CD4-positive, alpha-beta T cell (primary cell): ENCODE measurements at regions of chr10 and their contacts with region 1.

Region 1: GRCh38 chr10:70880077-70880534 is 8.3 kb downstream of the PCBD1 start:
- DNase-seq: peak; percentile 53 to 87 (median 66)
- ATAC-seq: peak; percentile 96
- H3K4me3 ChIP-seq: no peak overlapping the region
- H3K4me3 Mint-ChIP-seq: no peak overlapping the region
- H3K27ac ChIP-seq: no peak overlapping the region
- H3K27ac Mint-ChIP-seq: no peak overlapping the region
- H3K4me1 ChIP-seq: no peaks in the 10 kb centered on the region
- H3K4me1 Mint-ChIP-seq: peaks cover 4% of the 10 kb centered on the region
- H3K27me3 ChIP-seq: no peaks in the 10 kb centered on the region
- H3K27me3 Mint-ChIP-seq: no peaks in the 10 kb centered on the region
- CTCF ChIP-seq: peak; percentile 95

Region 2: GRCh38 chr10:70221030-70221429 is 659.1 kb before region 1 on chr10:
- CTCF ChIA-PET with region 1: no interaction called
- POLR2A ChIA-PET with region 1: no interaction called
- intact Hi-C with region 1: loop called in 1 of 2 experiments (anchors 5 kb)
- DNase-seq: peak in 1 of 14 experiments; percentile 8
- ATAC-seq: no peak
- H3K4me3 ChIP-seq: no peak overlapping the region
- H3K4me3 Mint-ChIP-seq: no peak overlapping the region
- H3K27ac ChIP-seq: no peak overlapping the region
- H3K27ac Mint-ChIP-seq: peak overlapping the region; percentile 21
- H3K4me1 ChIP-seq: peaks cover 3% of the 10 kb centered on the region
- H3K4me1 Mint-ChIP-seq: peaks cover 17% of the 10 kb centered on the region
- H3K27me3 ChIP-seq: no peaks in the 10 kb centered on the region
- H3K27me3 Mint-ChIP-seq: no peaks in the 10 kb centered on the region
- CTCF ChIP-seq: no peak

Region 3: DNA sequence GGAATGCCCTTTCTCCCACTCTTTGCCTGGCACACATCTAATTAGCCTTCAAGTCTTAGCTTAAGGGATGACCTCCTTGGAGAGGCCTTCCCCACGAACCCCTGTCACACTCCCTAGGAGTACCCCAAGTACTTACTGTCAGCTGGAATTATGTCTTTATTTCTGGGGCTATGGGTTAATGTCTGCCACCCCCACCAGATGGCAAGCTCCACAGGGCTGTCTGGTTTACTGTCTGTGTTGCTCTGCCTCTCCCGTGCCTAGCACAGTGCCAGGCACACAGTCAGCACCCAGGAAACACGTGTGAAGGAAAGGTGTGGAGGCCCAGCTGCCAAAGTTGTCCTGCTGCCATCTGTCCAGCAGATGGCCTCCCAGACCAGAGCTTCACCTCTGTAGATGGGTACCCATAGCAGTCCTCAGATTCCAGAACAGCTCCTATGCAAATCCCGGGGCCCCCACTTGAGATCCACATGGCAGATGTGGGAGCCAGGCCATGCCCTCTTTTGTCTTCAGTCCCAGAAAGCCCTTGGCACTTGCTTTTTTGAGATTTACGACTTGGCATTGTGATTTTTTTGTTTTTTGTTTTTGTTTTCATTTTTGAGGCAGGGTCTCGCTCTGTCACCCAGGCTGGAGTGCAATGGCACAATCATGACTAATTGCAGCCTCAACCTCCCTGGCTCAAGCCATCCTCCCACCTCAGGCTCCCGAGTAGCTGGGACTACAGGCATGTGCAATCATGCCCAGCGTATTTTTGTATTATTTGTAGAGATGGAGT is 418.7 kb before region 1 on chr10:
- CTCF ChIA-PET with region 1: interaction called, 3 read pairs
- POLR2A ChIA-PET with region 1: no interaction called
- intact Hi-C with region 1: loop called (anchors 1 to 2 kb)
- DNase-seq: peak in 13 of 14 experiments; percentile 30 to 72 (median 39)
- ATAC-seq: peak; percentile 75
- H3K4me3 ChIP-seq: no peak overlapping the region
- H3K4me3 Mint-ChIP-seq: no peak overlapping the region
- H3K27ac ChIP-seq: no peak overlapping the region
- H3K27ac Mint-ChIP-seq: no peak overlapping the region
- H3K4me1 ChIP-seq: peaks cover 12% of the 10 kb centered on the region
- H3K4me1 Mint-ChIP-seq: peaks cover 4% of the 10 kb centered on the region
- H3K27me3 ChIP-seq: peaks cover 16 to 34% of the 10 kb centered on the region in 2 experiments
- H3K27me3 Mint-ChIP-seq: peaks cover 44% of the 10 kb centered on the region
- CTCF ChIP-seq: peak; percentile 87

Region 4: GRCh38 chr10:70549962-70550458 is 330.1 kb before region 1 on chr10:
- CTCF ChIA-PET with region 1: interaction called, 3 read pairs
- POLR2A ChIA-PET with region 1: no interaction called
- intact Hi-C with region 1: loop called (anchors 1 kb)
- DNase-seq: peak; percentile 52 to 83 (median 68)
- ATAC-seq: peak; percentile 87
- H3K4me3 ChIP-seq: no peak overlapping the region
- H3K4me3 Mint-ChIP-seq: no peak overlapping the region
- H3K27ac ChIP-seq: no peak overlapping the region
- H3K27ac Mint-ChIP-seq: no peak overlapping the region
- H3K4me1 ChIP-seq: no peaks in the 10 kb centered on the region
- H3K4me1 Mint-ChIP-seq: no peaks in the 10 kb centered on the region
- H3K27me3 ChIP-seq: no peaks in the 10 kb centered on the region
- H3K27me3 Mint-ChIP-seq: no peaks in the 10 kb centered on the region
- CTCF ChIP-seq: peak; percentile 83

Region 5: DNA sequence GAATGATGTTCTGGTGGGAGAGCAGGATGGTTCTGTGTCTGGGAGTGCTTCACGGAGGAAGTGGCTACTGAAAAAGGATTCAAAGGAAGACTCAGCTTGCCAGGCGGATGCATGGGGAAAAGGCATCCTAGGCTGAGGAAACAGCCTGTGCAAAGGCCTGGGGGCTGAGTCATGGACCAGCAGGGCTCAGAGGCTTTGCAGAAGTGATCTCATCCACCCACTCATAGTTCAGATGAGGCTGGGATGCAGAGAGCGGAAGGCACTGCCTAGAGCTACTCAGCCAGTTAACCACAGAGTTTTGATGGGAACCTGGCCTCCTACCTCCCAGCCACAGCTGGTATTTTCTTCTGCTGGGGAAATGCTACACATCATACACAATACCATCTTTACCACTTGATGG is 223.6 kb before region 1 on chr10:
- CTCF ChIA-PET with region 1: no interaction called
- POLR2A ChIA-PET with region 1: no interaction called
- intact Hi-C with region 1: no loop called
- DNase-seq: peak in 1 of 14 experiments; percentile 11
- ATAC-seq: no peak
- H3K4me3 ChIP-seq: no peak overlapping the region
- H3K4me3 Mint-ChIP-seq: no peak overlapping the region
- H3K27ac ChIP-seq: no peak overlapping the region
- H3K27ac Mint-ChIP-seq: no peak overlapping the region
- H3K4me1 ChIP-seq: no peaks in the 10 kb centered on the region
- H3K4me1 Mint-ChIP-seq: no peaks in the 10 kb centered on the region
- H3K27me3 ChIP-seq: peaks cover 0 to 2% of the 10 kb centered on the region in 2 experiments
- H3K27me3 Mint-ChIP-seq: peaks cover under 1% of the 10 kb centered on the region
- CTCF ChIP-seq: no peak

Region 6: DNA sequence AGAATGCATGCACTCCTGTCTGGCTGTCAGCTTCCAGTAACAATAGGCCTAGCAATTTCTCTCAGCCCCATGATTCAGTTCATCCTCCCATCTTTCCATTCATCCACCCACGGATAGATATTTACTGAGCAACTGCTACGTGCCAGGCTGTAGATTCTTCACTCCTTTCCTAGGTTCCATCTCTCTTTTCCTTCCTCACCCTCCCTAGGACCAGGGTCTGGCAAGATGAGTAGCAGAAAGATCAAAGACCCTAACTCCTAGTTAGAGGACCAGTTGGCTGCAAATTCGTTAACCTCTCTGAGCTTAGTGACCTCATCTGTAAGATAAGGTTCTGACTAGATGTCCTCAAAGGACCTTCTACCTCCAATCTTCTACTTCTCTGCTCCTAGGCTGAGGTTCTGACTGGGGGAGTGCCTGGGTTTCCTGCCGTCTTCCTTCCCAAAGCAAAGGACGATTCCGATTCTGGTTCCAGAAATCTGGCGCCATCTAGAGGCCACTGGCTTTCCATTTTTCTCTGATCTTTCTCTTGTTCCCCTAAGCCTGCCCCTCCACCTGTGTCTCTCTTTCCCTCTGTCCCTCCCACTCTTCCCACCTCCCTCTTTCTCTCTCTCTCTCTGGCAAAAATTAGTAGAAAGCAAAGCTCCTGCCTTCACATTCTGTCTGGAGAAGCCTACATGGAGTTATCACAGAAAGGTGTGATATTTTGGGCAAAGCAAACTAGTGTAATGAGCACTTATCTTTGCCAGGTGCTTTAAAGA is 121.2 kb before region 1 on chr10:
- CTCF ChIA-PET with region 1: no interaction called
- POLR2A ChIA-PET with region 1: no interaction called
- intact Hi-C with region 1: loop called in 1 of 2 experiments (anchors 5 kb)
- DNase-seq: peak; percentile 34 to 81 (median 55)
- ATAC-seq: peak; percentile 54
- H3K4me3 ChIP-seq: no peak overlapping the region
- H3K4me3 Mint-ChIP-seq: no peak overlapping the region
- H3K27ac ChIP-seq: no peak overlapping the region
- H3K27ac Mint-ChIP-seq: no peak overlapping the region
- H3K4me1 ChIP-seq: peaks cover 5% of the 10 kb centered on the region
- H3K4me1 Mint-ChIP-seq: no peaks in the 10 kb centered on the region
- H3K27me3 ChIP-seq: no peaks in the 10 kb centered on the region
- H3K27me3 Mint-ChIP-seq: no peaks in the 10 kb centered on the region
- CTCF ChIP-seq: peak; percentile 79

Region 7: DNA sequence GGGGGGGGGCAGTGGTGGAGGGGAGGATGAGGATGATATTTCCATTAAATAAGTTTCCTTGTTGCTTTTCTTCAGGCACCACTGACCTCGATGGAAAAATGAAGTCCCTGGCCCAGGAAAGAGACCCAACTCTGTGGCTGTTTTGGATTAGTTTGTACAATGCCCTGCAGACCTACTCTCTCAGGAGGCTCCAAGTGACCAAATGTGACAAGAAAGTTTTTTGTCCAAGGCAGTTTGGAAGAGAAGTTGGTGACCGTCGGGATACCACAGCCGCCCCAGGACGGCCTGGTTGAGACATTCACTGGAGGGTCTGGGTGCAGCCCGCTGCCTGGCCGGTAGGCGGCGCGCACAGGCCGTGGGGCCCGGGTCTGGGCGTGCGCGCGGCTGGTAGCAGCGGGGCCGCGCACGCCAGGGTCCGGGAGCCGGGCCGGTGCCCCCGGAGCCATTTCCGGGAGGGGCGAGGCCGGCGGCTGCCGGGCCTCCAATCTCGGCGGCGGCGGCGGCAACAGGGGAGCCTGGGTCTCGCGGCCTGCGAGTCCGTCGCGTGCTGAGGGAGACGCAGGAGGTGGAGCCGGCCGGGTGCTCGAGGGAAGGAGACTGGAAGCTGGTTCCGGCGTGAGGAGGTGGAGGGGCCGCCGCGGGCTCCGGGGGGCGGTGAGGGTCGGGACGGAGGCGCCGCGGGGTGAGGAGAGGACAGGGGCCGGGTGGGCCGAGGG is 64.4 kb before region 1 on chr10 and contains the start of gene SGPL1:
- CTCF ChIA-PET with region 1: interaction called, 6 read pairs
- POLR2A ChIA-PET with region 1: interaction called, 3 read pairs
- intact Hi-C with region 1: loop called (anchors 1 kb)
- DNase-seq: peak; percentile 64 to 92 (median 82)
- ATAC-seq: peak; percentile 89
- H3K4me3 ChIP-seq: peak within 1 kb of the TSS; percentile 79
- H3K4me3 Mint-ChIP-seq: peak within 1 kb of the TSS; percentile 90
- H3K27ac ChIP-seq: peak within 1 kb of the TSS in 1 of 2 donors; percentile 44
- H3K27ac Mint-ChIP-seq: peak within 1 kb of the TSS; percentile 80
- H3K4me1 ChIP-seq: peaks cover 25% of the 10 kb centered on the region
- H3K4me1 Mint-ChIP-seq: peaks cover 52% of the 10 kb centered on the region
- H3K27me3 ChIP-seq: no peaks in the 10 kb centered on the region
- H3K27me3 Mint-ChIP-seq: no peaks in the 10 kb centered on the region
- CTCF ChIP-seq: peak; percentile 88
- total RNA-seq, gene SGPL1: 15.1 to 16.9 TPM